Activated T-helper 1 cell treated with anti-CD3 and anti-CD28 coated beads, Interleukin-12 subunit alpha, Interleukin-12 subunit beta, Interleukin-2, Interleukin-4 antibody, amounts not matched to agents 30 ng/mL and 10 ng/mL and 1 ng/mL, durations not matched to agents 14 hours and 24 hours and 36 hours (primary cell): ENCODE measurements at regions of chr5 and their contacts with region 1.

Region 1: GRCh38 chr5:88845081-88845697 is 37.8 kb downstream of the MEF2C start:
- DNase-seq: no peak
- H3K4me3 Mint-ChIP-seq: no peak overlapping the region
- H3K27ac Mint-ChIP-seq: no peak overlapping the region
- H3K4me1 Mint-ChIP-seq: no peaks in the 10 kb centered on the region
- H3K27me3 Mint-ChIP-seq: peaks cover 6% of the 10 kb centered on the region

Region 2: GRCh38 chr5:88833371-88834130 is 11.6 kb before region 1 on chr5:
- intact Hi-C with region 1: loop called (anchors 1 kb)
- DNase-seq: no peak
- H3K4me3 Mint-ChIP-seq: no peak overlapping the region
- H3K27ac Mint-ChIP-seq: no peak overlapping the region
- H3K4me1 Mint-ChIP-seq: peaks cover 16% of the 10 kb centered on the region
- H3K27me3 Mint-ChIP-seq: no peaks in the 10 kb centered on the region